BJ (cell line): ENCODE measurements at regions of chr15 and their contacts with region 1.

Region 1: GRCh38 chr15:90031231-90031791 is 30.2 kb downstream of the ZNF710 start:
- DNase-seq: no peak
- H3K4me3 ChIP-seq: no peak overlapping the region
- H3K27me3 ChIP-seq: no peaks in the 10 kb centered on the region
- CTCF ChIP-seq: no peak

Region 2: GRCh38 chr15:89728254-89728653 is 303.1 kb before region 1 on chr15:
- CTCF ChIA-PET with region 1: no interaction called
- POLR2A ChIA-PET with region 1: interaction called, 11 read pairs
- DNase-seq: no peak
- H3K4me3 ChIP-seq: no peak overlapping the region
- H3K27me3 ChIP-seq: peaks cover 19% of the 10 kb centered on the region
- CTCF ChIP-seq: no peak

Region 3: GRCh38 chr15:89776274-89777072 is 254.8 kb before region 1 on chr15 and contains the start of gene MESP2:
- CTCF ChIA-PET with region 1: no interaction called
- POLR2A ChIA-PET with region 1: no interaction called
- DNase-seq: no peak
- H3K4me3 ChIP-seq: peak within 1 kb of the TSS; percentile 40
- H3K27me3 ChIP-seq: no peaks in the 10 kb centered on the region
- CTCF ChIP-seq: peak; percentile 45
- polyA plus RNA-seq, gene MESP2: 0.28 and 0.39 TPM in 2 replicates

Region 4: DNA sequence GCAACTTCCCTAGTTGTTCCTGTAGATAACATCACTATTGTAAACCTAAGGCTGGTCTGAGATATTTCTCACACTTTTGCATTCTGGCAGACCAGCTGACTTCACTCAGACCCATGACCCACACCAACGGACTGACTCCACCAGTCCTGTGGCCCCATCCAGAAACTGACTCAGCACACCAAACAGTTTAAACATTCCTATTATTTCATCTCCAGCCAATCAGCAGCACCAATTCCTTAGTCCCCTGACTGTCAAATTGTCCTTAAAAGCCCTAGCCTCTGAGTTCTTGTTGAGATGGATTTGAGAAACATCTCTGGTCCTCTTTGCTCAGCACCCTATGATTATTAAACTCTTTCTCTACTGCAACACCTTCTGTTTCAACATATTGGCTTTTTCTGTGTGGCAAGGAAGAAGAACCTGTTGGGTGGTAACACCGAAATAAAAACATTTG is 83.2 kb after region 1 on chr15:
- CTCF ChIA-PET with region 1: no interaction called
- POLR2A ChIA-PET with region 1: no interaction called
- DNase-seq: no peak
- H3K4me3 ChIP-seq: no peak overlapping the region
- H3K27me3 ChIP-seq: no peaks in the 10 kb centered on the region
- CTCF ChIP-seq: no peak